HCT116 (cell line): ENCODE measurements at regions of chr15 and their contacts with region 1.

Region 1: DNA sequence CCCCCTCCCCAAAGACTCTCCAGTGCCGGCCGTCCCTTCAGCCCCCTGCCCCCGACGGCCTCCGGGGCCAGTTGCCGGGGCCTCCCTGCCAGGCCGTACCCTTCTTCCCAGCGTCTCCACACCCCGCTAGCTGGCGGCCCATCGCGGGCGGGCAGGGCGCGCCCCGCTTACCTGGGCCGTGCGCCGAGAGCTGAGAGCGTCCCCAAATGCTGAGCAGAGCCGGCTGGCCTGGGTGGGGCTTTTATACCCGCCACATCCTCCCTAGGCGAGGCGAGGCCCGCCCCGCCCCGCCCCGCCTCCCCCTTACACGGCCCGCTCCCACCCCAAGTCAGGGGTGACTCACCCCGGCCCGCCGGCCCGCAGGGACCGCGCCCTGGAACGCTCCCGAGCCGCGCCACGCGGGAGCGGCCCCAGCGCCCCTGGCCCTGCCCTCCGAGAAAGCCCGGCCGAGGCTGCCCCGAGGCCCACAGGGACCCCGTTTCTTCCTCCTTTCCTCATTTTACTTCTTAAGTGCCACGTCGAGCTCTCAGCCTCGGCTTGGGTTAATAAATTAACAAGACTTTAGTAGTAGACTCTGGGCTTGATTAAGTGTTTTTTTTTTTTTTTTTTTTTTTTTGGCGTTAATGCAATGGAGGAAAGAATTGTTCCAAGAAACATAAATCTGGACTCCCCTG is at the start of gene ANXA2:
- DNase-seq: peak; percentile 70
- ATAC-seq: peak; percentile 58
- H3K4me3 ChIP-seq: peak within 1 kb of the TSS; percentile 61 to 65
- H3K27ac ChIP-seq: peak within 1 kb of the TSS; percentile 96
- H3K4me1 ChIP-seq: peaks cover 61 to 85% of the 10 kb centered on the region in 2 experiments
- H3K27me3 ChIP-seq: no peaks in the 10 kb centered on the region
- CTCF ChIP-seq: no peak
- POLR2A ChIP-seq: peak; percentile 53
- RAD21 ChIP-seq: no peak
- total RNA-seq, gene ANXA2: 1,298 TPM

Region 2: GRCh38 chr15:60315878-60316277 is 82.0 kb before region 1 on chr15:
- CTCF ChIA-PET with region 1: no interaction called
- POLR2A ChIA-PET with region 1: no interaction called
- RAD21 ChIA-PET with region 1: no interaction called
- intact Hi-C with region 1: no loop called
- DNase-seq: no peak
- ATAC-seq: no peak
- H3K4me3 ChIP-seq: no peak overlapping the region
- H3K27ac ChIP-seq: no peak overlapping the region
- H3K4me1 ChIP-seq: peaks cover 0 to 4% of the 10 kb centered on the region in 2 experiments; a peak in 1 of 4 replicates
- H3K27me3 ChIP-seq: no peaks in the 10 kb centered on the region; the same call in 1 of the 2 replicates
- CTCF ChIP-seq: no peak
- POLR2A ChIP-seq: no peak
- RAD21 ChIP-seq: no peak

Region 3: GRCh38 chr15:60374628-60375081 is 23.3 kb before region 1 on chr15:
- CTCF ChIA-PET with region 1: no interaction called
- POLR2A ChIA-PET with region 1: interaction called, 70 read pairs
- RAD21 ChIA-PET with region 1: interaction called, 3 read pairs
- intact Hi-C with region 1: loop called (anchors 1 kb)
- DNase-seq: peak; percentile 96
- ATAC-seq: peak; percentile 71
- H3K4me3 ChIP-seq: peak overlapping the region in 1 of 2 experiments; percentile 16; a peak in 2 of 4 replicates
- H3K27ac ChIP-seq: peak overlapping the region; percentile 93
- H3K4me1 ChIP-seq: peaks cover 88 to 99% of the 10 kb centered on the region in 2 experiments
- H3K27me3 ChIP-seq: no peaks in the 10 kb centered on the region
- CTCF ChIP-seq: no peak
- POLR2A ChIP-seq: no peak
- RAD21 ChIP-seq: peak; percentile 27; the same call in 1 of the 2 replicates

Region 4: GRCh38 chr15:60381148-60381788 is 16.6 kb before region 1 on chr15:
- CTCF ChIA-PET with region 1: no interaction called
- POLR2A ChIA-PET with region 1: interaction called, 70 read pairs
- RAD21 ChIA-PET with region 1: no interaction called
- intact Hi-C with region 1: no loop called
- DNase-seq: no peak
- ATAC-seq: no peak
- H3K4me3 ChIP-seq: no peak overlapping the region
- H3K27ac ChIP-seq: peak overlapping the region; percentile 93
- H3K4me1 ChIP-seq: peaks cover 72 to 96% of the 10 kb centered on the region in 2 experiments
- H3K27me3 ChIP-seq: no peaks in the 10 kb centered on the region
- CTCF ChIP-seq: no peak
- POLR2A ChIP-seq: no peak
- RAD21 ChIP-seq: no peak

Region 5: DNA sequence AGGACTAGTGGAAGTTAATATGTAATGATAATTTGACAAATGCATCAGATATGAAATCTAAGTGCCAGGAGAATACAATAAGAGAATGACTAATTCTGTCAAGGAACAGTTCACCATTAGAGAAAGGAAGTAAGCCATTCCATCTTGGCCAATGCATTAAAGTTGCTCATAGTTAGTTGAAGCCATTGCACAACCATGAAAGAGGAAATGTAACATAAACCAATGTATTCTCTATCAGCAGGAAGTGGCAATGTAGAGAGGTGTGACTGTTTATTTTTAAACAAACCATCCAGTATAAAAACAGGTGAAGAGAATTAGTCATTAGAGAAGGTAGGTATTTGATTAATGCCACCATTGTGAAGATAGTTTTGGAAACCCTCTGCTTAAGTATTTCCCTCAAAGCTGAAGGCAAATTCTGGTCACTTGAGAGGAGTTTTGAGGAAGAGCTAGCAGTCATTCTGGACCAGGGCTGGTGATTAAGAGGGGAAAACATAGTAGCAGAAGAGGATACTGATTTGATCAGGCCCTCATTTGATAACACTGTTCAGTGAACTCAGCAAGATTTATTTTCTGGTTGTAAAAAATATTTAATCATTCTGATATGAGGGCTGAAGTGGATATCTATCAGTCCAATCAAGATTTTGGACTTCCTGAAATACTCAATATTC is 10.7 kb after region 1 on chr15:
- CTCF ChIA-PET with region 1: no interaction called
- POLR2A ChIA-PET with region 1: interaction called, 38 read pairs
- RAD21 ChIA-PET with region 1: no interaction called
- intact Hi-C with region 1: no loop called
- DNase-seq: no peak
- ATAC-seq: peak; percentile 18; the same call in 1 of the 2 replicates
- H3K4me3 ChIP-seq: no peak overlapping the region
- H3K27ac ChIP-seq: peak overlapping the region; percentile 28; the same call in 1 of the 2 replicates
- H3K4me1 ChIP-seq: peaks cover 29 to 37% of the 10 kb centered on the region in 2 experiments
- H3K27me3 ChIP-seq: no peaks in the 10 kb centered on the region
- CTCF ChIP-seq: no peak
- POLR2A ChIP-seq: no peak
- RAD21 ChIP-seq: no peak